B cell (primary cell): ENCODE measurements at regions of chr16 and their contacts with region 1.

Region 1: GRCh38 chr16:84084570-84085270 is 32.0 kb downstream of the MBTPS1 start:
- DNase-seq: peak; percentile 75
- ATAC-seq: peak; percentile 71
- H3K4me3 ChIP-seq: no peak overlapping the region
- H3K4me3 Mint-ChIP-seq: no peak overlapping the region
- H3K27ac ChIP-seq: no peak overlapping the region
- H3K27ac Mint-ChIP-seq: no peak overlapping the region
- H3K4me1 ChIP-seq: peaks cover 28 to 40% of the 10 kb centered on the region in 2 donors
- H3K4me1 Mint-ChIP-seq: peaks cover 41% of the 10 kb centered on the region
- H3K27me3 ChIP-seq: no peaks in the 10 kb centered on the region
- H3K27me3 Mint-ChIP-seq: no peaks in the 10 kb centered on the region
- CTCF ChIP-seq: peak; percentile 77

Region 2: GRCh38 chr16:84065536-84066132 is 19.1 kb before region 1 on chr16:
- CTCF ChIA-PET with region 1: interaction called, 13 read pairs
- POLR2A ChIA-PET with region 1: no interaction called
- intact Hi-C with region 1: no loop called
- DNase-seq: peak; percentile 37
- ATAC-seq: peak; percentile 45
- H3K4me3 ChIP-seq: no peak overlapping the region
- H3K4me3 Mint-ChIP-seq: no peak overlapping the region
- H3K27ac ChIP-seq: no peak overlapping the region
- H3K27ac Mint-ChIP-seq: no peak overlapping the region
- H3K4me1 ChIP-seq: no peaks in the 10 kb centered on the region
- H3K4me1 Mint-ChIP-seq: no peaks in the 10 kb centered on the region
- H3K27me3 ChIP-seq: no peaks in the 10 kb centered on the region
- H3K27me3 Mint-ChIP-seq: no peaks in the 10 kb centered on the region
- CTCF ChIP-seq: peak; percentile 71

Region 3: GRCh38 chr16:84116720-84117493 is 32.2 kb after region 1 on chr16 and contains the start of gene MBTPS1:
- CTCF ChIA-PET with region 1: interaction called, 11 read pairs
- POLR2A ChIA-PET with region 1: interaction called, 5 read pairs
- intact Hi-C with region 1: no loop called
- DNase-seq: peak; percentile 99
- ATAC-seq: peak; percentile 87
- H3K4me3 ChIP-seq: peak within 1 kb of the TSS; percentile 83 to 97 (median 94)
- H3K4me3 Mint-ChIP-seq: peak within 1 kb of the TSS; percentile 97
- H3K27ac ChIP-seq: peak within 1 kb of the TSS; percentile 75 to 94
- H3K27ac Mint-ChIP-seq: peak within 1 kb of the TSS; percentile 96
- H3K4me1 ChIP-seq: peaks cover 16 to 20% of the 10 kb centered on the region in 2 donors
- H3K4me1 Mint-ChIP-seq: peaks cover 20% of the 10 kb centered on the region
- H3K27me3 ChIP-seq: no peaks in the 10 kb centered on the region
- H3K27me3 Mint-ChIP-seq: no peaks in the 10 kb centered on the region
- CTCF ChIP-seq: peak; percentile 14
- total RNA-seq, gene MBTPS1: 119 and 120 TPM in 2 replicates

Region 4: DNA sequence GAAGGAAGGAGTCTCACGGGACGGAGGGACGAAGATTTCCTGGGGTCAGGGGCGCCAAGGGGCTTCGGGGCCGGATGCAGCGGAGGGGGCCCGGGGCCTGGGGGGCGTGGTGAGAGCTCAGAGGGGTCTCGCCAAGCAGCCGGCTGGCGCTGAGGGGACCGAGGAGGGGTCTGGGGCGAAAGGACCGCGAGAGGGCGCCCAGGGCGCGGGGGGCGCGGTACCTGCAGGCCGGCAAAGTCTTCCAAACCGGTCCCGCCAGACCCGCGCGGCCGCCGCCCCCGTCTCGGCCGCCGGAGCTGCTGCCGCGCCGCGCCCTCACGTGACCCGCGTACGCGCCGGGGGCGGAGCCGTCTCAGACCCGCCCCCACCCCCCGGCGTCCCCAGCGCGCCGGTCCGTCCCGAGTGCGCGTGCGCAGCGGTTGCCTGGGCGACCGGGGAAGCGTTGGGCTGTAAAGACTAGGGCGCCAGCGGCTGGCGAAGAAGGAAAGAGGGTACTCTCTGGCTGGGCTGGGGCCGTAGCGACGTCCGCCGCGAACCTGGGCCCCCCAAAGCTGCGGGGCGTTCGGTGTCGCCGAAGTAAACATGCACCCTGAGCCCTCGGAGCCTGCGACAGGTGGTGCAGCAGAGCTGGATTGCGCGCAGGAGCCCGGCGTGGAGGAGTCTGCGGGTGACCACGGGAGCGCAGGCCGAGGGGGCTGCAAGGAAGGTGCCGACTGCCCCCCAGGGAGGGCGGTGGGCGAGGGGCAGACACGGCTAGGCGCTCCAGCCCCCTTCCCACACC is 60.3 kb after region 1 on chr16 and contains the starts of genes DNAAF1 and HSDL1:
- CTCF ChIA-PET with region 1: no interaction called
- POLR2A ChIA-PET with region 1: no interaction called
- intact Hi-C with region 1: loop called (anchors 5 kb)
- DNase-seq: peak; percentile 96
- ATAC-seq: peak; percentile 88
- H3K4me3 ChIP-seq: peak within 1 kb of the TSS; percentile 46 to 80 (median 75)
- H3K4me3 Mint-ChIP-seq: peak within 1 kb of the TSS; percentile 96
- H3K27ac ChIP-seq: peak within 1 kb of the TSS; percentile 34 to 86
- H3K27ac Mint-ChIP-seq: peak within 1 kb of the TSS; percentile 91
- H3K4me1 ChIP-seq: peaks cover 3 to 14% of the 10 kb centered on the region in 2 donors
- H3K4me1 Mint-ChIP-seq: peaks cover 14% of the 10 kb centered on the region
- H3K27me3 ChIP-seq: peaks cover 0 to 2% (median 0%) of the 10 kb centered on the region in 4 experiments
- H3K27me3 Mint-ChIP-seq: peaks cover 16% of the 10 kb centered on the region
- CTCF ChIP-seq: no peak
- total RNA-seq, gene DNAAF1: 0.29 and 0.30 TPM in 2 replicates
- total RNA-seq, gene HSDL1: 30.8 and 40.2 TPM in 2 replicates

Region 5: DNA sequence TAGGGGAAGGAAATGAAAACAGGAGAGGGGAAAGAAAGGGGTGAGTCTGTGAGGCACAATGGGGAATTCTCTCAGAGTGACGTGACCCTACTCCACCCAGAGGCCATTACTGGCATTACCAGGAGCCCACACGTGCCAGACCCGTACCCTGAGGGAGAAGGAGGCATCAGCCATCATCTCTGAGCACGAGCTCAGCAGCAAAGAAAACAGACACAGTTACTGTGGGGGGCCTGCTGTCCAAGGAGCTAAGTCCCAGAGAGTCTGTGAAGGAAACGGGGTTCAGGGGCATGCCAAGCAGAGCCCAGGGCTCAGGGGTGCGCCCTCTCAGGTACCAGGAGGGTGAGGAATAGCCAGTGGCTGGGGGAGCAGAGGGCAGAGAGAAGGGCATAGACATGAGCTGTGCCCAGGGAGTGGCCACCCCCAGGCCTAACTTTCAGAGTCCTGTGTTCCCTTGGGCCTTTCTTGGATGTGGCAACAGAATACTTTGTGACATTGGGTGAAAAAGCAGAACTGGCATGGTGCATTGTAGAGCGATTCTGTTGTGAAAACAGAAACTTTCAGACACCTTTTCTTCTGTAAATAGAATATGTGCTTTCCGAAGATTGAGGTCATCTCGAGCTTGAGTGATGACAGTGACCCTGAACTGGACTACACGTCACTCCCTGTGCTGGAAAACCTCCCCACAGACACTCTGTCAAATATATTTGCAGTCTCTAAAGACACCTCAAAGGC is 90.8 kb after region 1 on chr16:
- CTCF ChIA-PET with region 1: interaction called, 26 read pairs
- POLR2A ChIA-PET with region 1: no interaction called
- intact Hi-C with region 1: loop called (anchors 1 kb)
- DNase-seq: peak; percentile 64
- ATAC-seq: peak; percentile 87
- H3K4me3 ChIP-seq: no peak overlapping the region
- H3K4me3 Mint-ChIP-seq: no peak overlapping the region
- H3K27ac ChIP-seq: no peak overlapping the region
- H3K27ac Mint-ChIP-seq: no peak overlapping the region
- H3K4me1 ChIP-seq: peaks cover 0 to 3% of the 10 kb centered on the region in 2 donors
- H3K4me1 Mint-ChIP-seq: peaks cover 6% of the 10 kb centered on the region
- H3K27me3 ChIP-seq: no peaks in the 10 kb centered on the region
- H3K27me3 Mint-ChIP-seq: peaks cover 3% of the 10 kb centered on the region
- CTCF ChIP-seq: peak; percentile 64

Region 6: DNA sequence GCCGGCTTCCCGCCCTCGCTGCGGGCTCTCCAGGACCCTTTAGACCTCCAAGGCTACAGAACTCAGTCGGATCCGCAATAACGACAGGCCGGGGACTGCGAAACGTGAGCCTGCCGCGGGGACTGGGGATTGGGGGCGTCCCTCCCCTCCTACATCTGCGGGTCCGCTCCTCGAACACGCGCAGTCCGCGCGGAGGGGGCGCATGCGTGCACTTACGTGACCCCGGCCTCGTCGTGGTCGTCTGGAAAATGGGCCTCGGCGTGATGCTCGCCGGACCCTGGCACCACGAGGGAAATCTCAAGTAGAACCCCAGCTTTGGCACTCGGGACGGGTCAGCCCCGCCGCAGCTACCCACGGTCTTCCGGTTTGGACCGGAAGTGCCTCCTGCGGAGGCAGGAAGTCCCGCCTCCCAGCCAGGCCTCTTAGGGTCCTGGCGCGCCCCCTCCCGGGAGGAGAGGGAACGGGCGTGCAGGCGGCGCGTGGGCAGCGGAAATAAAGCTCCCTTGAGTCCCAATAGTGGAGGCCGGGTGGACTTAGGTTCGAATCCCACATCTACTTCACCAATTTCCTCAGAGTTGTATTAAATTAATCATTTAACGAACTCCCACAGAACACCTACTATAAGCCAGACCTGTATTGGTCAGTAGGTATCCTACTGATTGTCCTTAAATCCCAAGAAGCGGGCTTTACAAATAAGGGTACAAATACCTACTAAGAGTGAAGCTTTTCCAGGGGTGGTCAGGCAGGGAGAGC is 102.1 kb after region 1 on chr16 and contains the start of gene TAF1C:
- CTCF ChIA-PET with region 1: interaction called, 60 read pairs
- POLR2A ChIA-PET with region 1: interaction called, 5 read pairs
- intact Hi-C with region 1: loop called (anchors 1 kb)
- DNase-seq: peak; percentile 96
- ATAC-seq: peak; percentile 99
- H3K4me3 ChIP-seq: peak within 1 kb of the TSS; percentile 70 to 98 (median 88)
- H3K4me3 Mint-ChIP-seq: peak within 1 kb of the TSS; percentile 96
- H3K27ac ChIP-seq: peak within 1 kb of the TSS; percentile 26 to 83
- H3K27ac Mint-ChIP-seq: peak within 1 kb of the TSS; percentile 88
- H3K4me1 ChIP-seq: peaks cover 7 to 10% of the 10 kb centered on the region in 2 donors
- H3K4me1 Mint-ChIP-seq: peaks cover 22% of the 10 kb centered on the region
- H3K27me3 ChIP-seq: no peaks in the 10 kb centered on the region
- H3K27me3 Mint-ChIP-seq: no peaks in the 10 kb centered on the region
- CTCF ChIP-seq: peak; percentile 88
- total RNA-seq, gene TAF1C: 110 and 115 TPM in 2 replicates

Region 7: DNA sequence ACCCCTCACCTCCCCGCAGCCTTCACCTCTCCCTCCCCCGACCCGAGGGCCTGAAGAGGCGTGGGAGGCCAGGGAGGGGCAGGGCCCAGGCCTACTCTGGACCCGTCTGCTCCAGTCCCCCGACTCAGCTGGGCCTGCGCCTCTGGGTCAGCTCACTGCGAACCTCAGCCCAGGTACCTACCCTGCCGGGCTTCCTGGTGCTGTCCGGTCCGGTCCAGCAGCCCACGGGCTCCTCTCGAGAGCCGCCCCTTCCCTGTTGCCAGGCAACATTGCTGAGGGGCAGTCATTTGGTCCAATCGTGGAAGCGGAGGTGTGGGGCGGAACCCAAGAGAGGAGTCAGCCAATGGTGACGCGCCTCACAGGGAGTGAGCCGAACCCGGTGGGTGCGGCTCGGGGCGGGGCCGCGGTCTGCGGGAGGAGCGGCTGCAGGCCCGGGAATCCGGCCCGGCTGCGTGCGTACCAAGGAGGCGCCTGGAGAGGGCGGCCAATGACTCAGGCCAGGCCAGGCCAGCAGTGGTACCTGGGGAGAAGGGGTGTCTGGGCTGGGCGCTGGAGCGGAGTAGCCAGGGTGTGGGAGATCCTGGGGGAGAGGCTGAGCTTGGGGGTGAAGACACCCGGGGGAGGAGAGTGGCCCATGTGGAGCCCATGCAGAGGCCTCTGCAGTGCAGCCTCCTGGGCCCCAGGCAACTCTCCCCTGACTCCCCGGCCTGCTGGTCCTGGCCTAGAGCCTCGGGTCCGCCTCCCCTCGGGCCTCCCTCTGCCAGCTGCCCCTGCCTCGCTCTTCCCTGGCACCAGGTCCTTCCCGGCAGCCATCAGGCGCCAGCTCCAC is 419.9 kb after region 1 on chr16 and contains the start of gene MEAK7:
- CTCF ChIA-PET with region 1: no interaction called
- POLR2A ChIA-PET with region 1: no interaction called
- intact Hi-C with region 1: loop called (anchors 10 kb)
- DNase-seq: peak; percentile 98
- ATAC-seq: peak; percentile 97
- H3K4me3 ChIP-seq: peak within 1 kb of the TSS; percentile 63 to 88 (median 77)
- H3K4me3 Mint-ChIP-seq: peak within 1 kb of the TSS; percentile 95
- H3K27ac ChIP-seq: peak within 1 kb of the TSS; percentile 47 to 65
- H3K27ac Mint-ChIP-seq: peak within 1 kb of the TSS; percentile 90
- H3K4me1 ChIP-seq: peaks cover 33 to 44% of the 10 kb centered on the region in 2 donors
- H3K4me1 Mint-ChIP-seq: peaks cover 49% of the 10 kb centered on the region
- H3K27me3 ChIP-seq: no peaks in the 10 kb centered on the region
- H3K27me3 Mint-ChIP-seq: no peaks in the 10 kb centered on the region
- CTCF ChIP-seq: no peak
- total RNA-seq, gene MEAK7: 19.3 and 23.0 TPM in 2 replicates